BJ (cell line): ENCODE measurements at regions of chr20 and their contacts with region 1.

Region 1: GRCh38 chr20:34709044-34709830 is 5.1 kb downstream of the TP53INP2 start:
- DNase-seq: no peak
- H3K4me3 ChIP-seq: peak overlapping the region; percentile 67
- H3K27me3 ChIP-seq: no peaks in the 10 kb centered on the region
- CTCF ChIP-seq: no peak

Region 2: DNA sequence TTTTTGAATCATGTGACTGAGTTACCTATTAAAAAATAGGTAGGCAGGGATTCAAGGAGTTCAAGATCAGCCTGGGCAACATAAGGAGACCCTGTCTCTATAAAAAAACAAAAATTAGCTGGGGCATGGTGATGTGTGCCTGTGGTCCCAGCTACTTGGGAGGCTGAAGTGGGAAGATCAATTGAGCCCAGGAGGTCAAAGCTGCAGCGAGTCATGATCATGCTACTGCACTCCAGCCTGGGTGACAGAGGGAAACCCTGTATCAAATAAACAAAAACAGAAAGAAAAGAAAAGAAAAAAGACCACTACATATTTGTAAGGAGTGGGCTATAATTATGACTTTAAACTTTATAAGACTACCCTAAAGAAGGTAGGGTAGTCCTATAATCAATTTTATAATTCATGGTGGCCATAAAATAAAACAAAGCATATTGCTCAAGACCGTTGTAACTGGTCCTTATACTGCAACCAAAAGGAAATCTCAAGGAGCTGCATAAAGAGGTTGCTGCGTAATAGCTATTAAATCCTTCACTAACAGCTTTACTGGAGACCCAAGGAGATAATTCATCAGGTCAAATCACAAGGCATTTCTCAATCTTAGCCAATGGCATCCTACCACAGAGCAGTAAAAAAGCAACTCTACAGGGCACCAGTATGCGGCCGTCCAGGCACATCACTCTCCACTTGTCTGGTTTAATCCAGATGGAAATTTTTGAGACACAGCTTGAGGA is 45.9 kb before region 1 on chr20:
- CTCF ChIA-PET with region 1: no interaction called
- POLR2A ChIA-PET with region 1: no interaction called
- DNase-seq: no peak
- H3K4me3 ChIP-seq: no peak overlapping the region
- H3K27me3 ChIP-seq: no peaks in the 10 kb centered on the region
- CTCF ChIP-seq: no peak

Region 3: DNA sequence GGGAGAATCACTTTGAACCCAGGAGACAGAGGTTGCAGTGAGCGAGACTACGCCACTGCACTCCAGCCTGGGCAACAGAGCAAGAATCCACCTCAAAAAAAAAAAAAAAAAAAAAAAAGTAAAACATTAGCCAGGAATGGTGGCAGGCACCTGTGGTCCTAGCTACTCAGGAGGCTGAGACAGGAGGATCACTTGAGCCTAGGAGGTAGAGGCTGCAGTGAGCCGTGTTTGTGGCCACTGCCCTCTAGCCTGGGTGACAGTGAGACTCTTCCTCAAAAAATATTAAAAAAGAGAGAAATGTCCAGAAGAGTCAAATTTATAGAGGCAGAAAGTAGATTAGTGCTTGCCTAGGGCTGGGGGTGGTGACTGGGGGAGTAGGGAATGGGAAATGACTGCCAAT is 25.6 kb before region 1 on chr20:
- CTCF ChIA-PET with region 1: no interaction called
- POLR2A ChIA-PET with region 1: interaction called, 10 read pairs
- DNase-seq: no peak
- H3K4me3 ChIP-seq: no peak overlapping the region
- H3K27me3 ChIP-seq: no peaks in the 10 kb centered on the region
- CTCF ChIP-seq: no peak

Region 4: DNA sequence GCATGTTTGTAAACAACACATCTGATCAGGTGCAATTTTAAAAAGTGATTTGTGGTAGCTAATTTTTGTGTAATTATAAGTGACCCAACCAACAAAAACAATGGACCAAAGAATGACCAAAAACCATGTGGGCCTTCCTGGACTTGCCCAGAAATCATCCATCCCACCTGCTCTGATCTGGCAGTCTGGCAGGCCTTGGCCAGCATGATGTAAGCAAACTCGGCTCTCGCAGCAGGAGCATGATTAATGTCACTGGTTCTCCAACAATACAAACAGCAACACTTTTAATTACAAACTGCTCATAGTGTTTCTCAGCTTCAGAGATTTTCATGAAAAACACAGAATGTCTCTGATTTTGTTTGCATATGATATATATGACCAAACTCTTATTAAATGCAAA is 11.0 kb after region 1 on chr20:
- CTCF ChIA-PET with region 1: interaction called, 11 read pairs
- POLR2A ChIA-PET with region 1: interaction called, 10 read pairs
- DNase-seq: no peak
- H3K4me3 ChIP-seq: no peak overlapping the region
- H3K27me3 ChIP-seq: no peaks in the 10 kb centered on the region
- CTCF ChIP-seq: no peak